Gastrocnemius medialis (tissue), 4 donors: ENCODE measurements at regions of chr12 and their contacts with region 1.

Region 1: GRCh38 chr12:110888256-110888991 is 32.0 kb downstream of the MYL2 start:
- DNase-seq: no peak
- ATAC-seq: no peak
- H3K4me3 ChIP-seq: peak overlapping the region in 2 of 4 donors; percentile 45 to 58
- H3K27ac ChIP-seq: peak overlapping the region in 1 of 4 donors; percentile 58
- H3K4me1 ChIP-seq: no peaks in the 10 kb centered on the region
- H3K27me3 ChIP-seq: no peaks in the 10 kb centered on the region
- CTCF ChIP-seq: peak in 1 of 5 experiments; percentile 8
- POLR2A ChIP-seq: no peak

Region 2: DNA sequence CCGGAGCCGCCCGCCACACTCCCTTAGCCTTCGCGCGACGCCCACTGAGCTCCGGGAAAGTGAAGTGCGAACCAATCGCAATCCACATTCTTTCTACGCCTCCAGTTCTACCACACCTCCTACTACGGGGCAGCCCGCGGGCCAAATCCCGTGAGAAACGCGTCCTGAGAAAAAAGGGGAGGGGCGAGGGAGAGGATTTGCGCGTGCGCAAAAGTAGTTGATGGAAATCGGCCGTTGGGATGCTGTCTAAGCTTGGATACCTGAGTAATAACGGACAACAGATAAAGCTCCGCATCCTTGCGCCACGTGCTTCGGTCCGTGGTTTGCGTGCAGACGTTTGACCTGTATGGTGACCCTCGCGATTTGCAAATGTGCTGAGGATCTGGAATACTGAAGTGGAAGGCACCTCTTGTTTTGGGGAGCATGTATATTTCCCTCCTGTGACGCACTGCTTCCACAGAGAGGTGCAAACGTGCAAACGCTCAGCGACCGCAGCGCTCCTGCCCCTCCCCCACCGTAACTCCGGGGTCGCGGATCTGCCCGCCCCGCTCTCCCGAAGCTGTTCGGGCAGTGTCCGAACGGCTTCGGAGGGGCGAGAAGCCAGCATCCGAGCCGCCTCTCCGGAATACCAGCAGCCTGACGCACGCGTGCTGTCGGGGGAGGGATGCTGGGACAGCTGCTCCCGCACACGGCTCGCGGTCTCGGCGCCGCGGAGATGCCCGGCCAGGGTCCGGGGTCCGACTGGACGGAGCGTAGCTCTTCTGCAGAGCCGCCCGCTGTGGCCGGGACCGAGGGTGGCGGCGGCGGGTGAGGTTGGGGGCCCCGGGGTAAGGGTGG is 420.0 kb before region 1 on chr12 and contains the starts of genes FAM216A and GPN3:
- in situ Hi-C with region 1: no loop called
- intact Hi-C with region 1: loop called (anchors 5 kb)
- DNase-seq: peak; percentile 94 to 97
- ATAC-seq: peak; percentile 94 to 95
- H3K4me3 ChIP-seq: peak within 1 kb of the TSS; percentile 63 to 89 (median 73)
- H3K27ac ChIP-seq: peak within 1 kb of the TSS; percentile 86 to 90 (median 88)
- H3K4me1 ChIP-seq: peaks cover 15 to 25% of the 10 kb centered on the region in 2 donors
- H3K27me3 ChIP-seq: no peaks in the 10 kb centered on the region
- CTCF ChIP-seq: no peak
- POLR2A ChIP-seq: peak; percentile 88 to 89
- total RNA-seq, gene FAM216A: 0.82 to 3.5 (median 2.2) TPM
- total RNA-seq, gene GPN3: 18.4 to 26.8 (median 24.6) TPM

Region 3: DNA sequence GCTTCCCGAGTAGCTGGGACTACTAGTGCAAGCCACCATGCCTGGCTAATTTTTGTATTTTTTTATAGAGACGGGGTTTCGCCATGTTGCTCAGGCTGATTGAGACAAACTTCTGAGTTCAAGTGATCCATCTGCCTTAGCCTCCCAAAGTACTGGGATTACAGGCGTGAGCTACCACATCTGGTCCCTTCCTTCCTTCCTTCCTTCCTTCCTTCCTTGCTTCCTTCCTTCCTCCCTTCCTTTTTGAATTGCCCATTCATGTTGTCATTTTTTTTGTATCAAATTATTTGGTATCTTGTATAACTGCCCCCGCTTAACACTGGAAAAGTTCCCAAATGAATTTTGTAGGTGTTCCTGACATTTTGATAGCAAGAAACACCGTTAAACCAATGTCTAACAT is 374.6 kb before region 1 on chr12:
- in situ Hi-C with region 1: no loop called
- intact Hi-C with region 1: loop called (anchors 5 kb)
- DNase-seq: no peak
- ATAC-seq: no peak
- H3K4me3 ChIP-seq: no peak overlapping the region
- H3K27ac ChIP-seq: no peak overlapping the region
- H3K4me1 ChIP-seq: no peaks in the 10 kb centered on the region
- H3K27me3 ChIP-seq: no peaks in the 10 kb centered on the region
- CTCF ChIP-seq: no peak
- POLR2A ChIP-seq: no peak

Region 4: DNA sequence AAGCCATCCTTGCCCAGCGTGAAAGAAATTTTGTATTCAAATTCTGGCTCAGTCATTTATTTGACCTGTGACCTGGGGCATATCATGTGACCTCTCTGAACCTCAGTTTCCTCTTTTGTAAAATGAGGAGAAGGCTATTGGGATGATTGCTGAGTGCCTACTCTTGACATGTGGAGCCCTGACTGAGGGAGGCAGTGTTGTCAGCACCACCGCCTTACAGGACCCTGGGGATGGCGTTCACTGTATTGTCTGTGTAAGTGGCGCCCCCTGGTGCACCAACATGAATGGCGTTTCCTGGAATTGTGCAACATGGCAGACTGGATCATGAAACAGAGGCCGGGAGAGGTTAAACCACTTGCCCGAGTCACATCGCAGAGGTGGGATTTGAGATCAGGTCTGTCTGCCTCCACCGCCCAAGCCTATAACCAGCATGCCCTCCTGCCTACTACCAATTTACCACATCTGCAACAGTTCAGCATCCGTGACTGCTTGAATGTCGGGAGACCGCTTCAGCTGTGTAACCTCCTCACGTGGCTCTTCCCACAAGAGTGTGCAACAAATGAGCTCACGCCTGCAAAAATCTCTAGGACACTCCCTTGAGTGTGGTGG is 61.7 kb before region 1 on chr12:
- in situ Hi-C with region 1: no loop called
- intact Hi-C with region 1: loop called (anchors 1 kb)
- DNase-seq: peak; percentile 55 to 90
- ATAC-seq: peak; percentile 93 to 99
- H3K4me3 ChIP-seq: peak overlapping the region in 3 of 4 donors; percentile 29 to 41 (median 34)
- H3K27ac ChIP-seq: no peak overlapping the region
- H3K4me1 ChIP-seq: peaks cover 0 to 4% of the 10 kb centered on the region in 2 donors
- H3K27me3 ChIP-seq: no peaks in the 10 kb centered on the region
- CTCF ChIP-seq: peak; percentile 75 to 97 (median 85)
- POLR2A ChIP-seq: no peak

Region 5: DNA sequence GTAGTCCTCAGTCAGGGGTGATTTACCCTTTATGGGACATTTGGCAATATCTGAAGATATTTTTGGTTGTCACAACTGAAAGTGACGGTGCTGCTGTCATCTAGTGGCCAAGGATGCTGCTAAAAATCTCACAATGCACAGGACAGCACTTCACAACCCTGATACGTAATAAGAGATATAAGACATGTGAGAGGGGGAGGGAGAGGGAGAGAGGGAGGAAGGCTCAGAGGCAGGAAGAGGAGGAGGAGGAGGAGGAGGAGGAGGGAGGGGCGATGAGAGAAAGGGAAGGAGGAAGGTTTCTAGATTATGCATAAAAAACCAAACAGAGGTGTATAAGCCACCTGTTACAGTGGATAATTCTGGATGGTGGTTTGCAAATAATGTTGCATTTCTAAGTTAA is 17.7 kb after region 1 on chr12:
- in situ Hi-C with region 1: no loop called
- intact Hi-C with region 1: no loop called
- DNase-seq: no peak
- ATAC-seq: no peak
- H3K4me3 ChIP-seq: no peak overlapping the region
- H3K27ac ChIP-seq: no peak overlapping the region
- H3K4me1 ChIP-seq: peaks cover 0 to 8% of the 10 kb centered on the region in 2 donors
- H3K27me3 ChIP-seq: no peaks in the 10 kb centered on the region
- CTCF ChIP-seq: no peak
- POLR2A ChIP-seq: no peak

Region 6: GRCh38 chr12:111313833-111314259 is 425.4 kb after region 1 on chr12:
- in situ Hi-C with region 1: loop called in 3 of 4 experiments (anchors 10 to 25 kb)
- intact Hi-C with region 1: no loop called
- DNase-seq: peak; percentile 50 to 52
- ATAC-seq: peak; percentile 64 to 80
- H3K4me3 ChIP-seq: peak overlapping the region in 1 of 4 donors; percentile 1
- H3K27ac ChIP-seq: no peak overlapping the region
- H3K4me1 ChIP-seq: no peaks in the 10 kb centered on the region
- H3K27me3 ChIP-seq: peaks cover 2 to 8% (median 5%) of the 10 kb centered on the region in 3 donors
- CTCF ChIP-seq: peak; percentile 36 to 91 (median 85)
- POLR2A ChIP-seq: no peak